Prostate gland (tissue), 2 donors: ENCODE measurements at regions of chr1 and their contacts with region 1.

Region 1: GRCh38 chr1:87131809-87132283 is 196.8 kb upstream of the LMO4 start:
- DNase-seq: peak; percentile 48
- H3K4me3 ChIP-seq: peak overlapping the region; percentile 22 to 33
- H3K27ac ChIP-seq: peak overlapping the region in 1 of 2 donors; percentile 39
- H3K4me1 ChIP-seq: no peaks in the 10 kb centered on the region
- H3K27me3 ChIP-seq: no peaks in the 10 kb centered on the region
- CTCF ChIP-seq: peak; percentile 69 to 88 (median 75)
- POLR2A ChIP-seq: no peak

Region 2: GRCh38 chr1:87292684-87293493 is 161.0 kb after region 1 on chr1:
- intact Hi-C with region 1: loop called (anchors 10 kb)
- DNase-seq: peak; percentile 49
- H3K4me3 ChIP-seq: no peak overlapping the region
- H3K27ac ChIP-seq: no peak overlapping the region
- H3K4me1 ChIP-seq: no peaks in the 10 kb centered on the region
- H3K27me3 ChIP-seq: no peaks in the 10 kb centered on the region
- CTCF ChIP-seq: peak; percentile 50 to 83 (median 71)
- POLR2A ChIP-seq: no peak

Region 3: GRCh38 chr1:88061492-88062177 is 929.8 kb after region 1 on chr1:
- intact Hi-C with region 1: loop called (anchors 10 kb)
- DNase-seq: peak; percentile 36
- H3K4me3 ChIP-seq: no peak overlapping the region
- H3K27ac ChIP-seq: no peak overlapping the region
- H3K4me1 ChIP-seq: no peaks in the 10 kb centered on the region
- H3K27me3 ChIP-seq: no peaks in the 10 kb centered on the region
- CTCF ChIP-seq: peak in 3 of 4 experiments; percentile 45 to 70 (median 62)
- POLR2A ChIP-seq: no peak

Region 4: DNA sequence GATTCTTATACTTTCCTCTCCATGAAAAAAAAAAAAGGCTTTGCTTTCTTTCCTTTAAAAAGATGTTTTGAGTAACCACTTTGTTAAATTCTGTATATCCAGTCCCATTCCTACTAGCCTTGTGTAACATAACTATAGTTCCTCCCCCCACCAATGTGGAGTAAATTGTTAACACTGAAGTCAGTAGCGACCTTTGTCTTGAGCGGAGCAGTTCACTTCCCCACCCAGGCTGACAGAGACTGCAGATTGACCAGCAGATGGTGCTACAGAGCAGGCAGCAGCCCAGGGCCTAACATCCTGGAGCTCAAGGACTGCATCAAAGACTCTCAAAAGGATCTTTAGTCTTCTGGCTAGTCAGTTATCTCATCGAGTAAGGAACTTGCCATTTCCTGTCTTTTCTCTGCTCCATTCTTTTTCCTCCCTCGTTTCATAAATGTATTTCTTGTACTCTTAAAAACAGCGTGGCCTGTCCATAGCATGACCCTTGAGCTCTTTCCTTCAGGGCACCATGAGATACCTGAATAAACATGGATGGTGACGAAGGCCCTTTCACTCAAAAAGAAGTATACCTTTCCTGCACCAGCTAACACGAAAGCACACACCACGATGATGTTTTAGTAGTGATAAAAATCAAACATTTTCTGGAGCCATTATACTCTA is 1048.7 kb after region 1 on chr1:
- intact Hi-C with region 1: loop called (anchors 10 kb)
- DNase-seq: peak; percentile 38
- H3K4me3 ChIP-seq: no peak overlapping the region
- H3K27ac ChIP-seq: no peak overlapping the region
- H3K4me1 ChIP-seq: no peaks in the 10 kb centered on the region
- H3K27me3 ChIP-seq: no peaks in the 10 kb centered on the region
- CTCF ChIP-seq: peak; percentile 70 to 78 (median 73)
- POLR2A ChIP-seq: no peak

Region 5: DNA sequence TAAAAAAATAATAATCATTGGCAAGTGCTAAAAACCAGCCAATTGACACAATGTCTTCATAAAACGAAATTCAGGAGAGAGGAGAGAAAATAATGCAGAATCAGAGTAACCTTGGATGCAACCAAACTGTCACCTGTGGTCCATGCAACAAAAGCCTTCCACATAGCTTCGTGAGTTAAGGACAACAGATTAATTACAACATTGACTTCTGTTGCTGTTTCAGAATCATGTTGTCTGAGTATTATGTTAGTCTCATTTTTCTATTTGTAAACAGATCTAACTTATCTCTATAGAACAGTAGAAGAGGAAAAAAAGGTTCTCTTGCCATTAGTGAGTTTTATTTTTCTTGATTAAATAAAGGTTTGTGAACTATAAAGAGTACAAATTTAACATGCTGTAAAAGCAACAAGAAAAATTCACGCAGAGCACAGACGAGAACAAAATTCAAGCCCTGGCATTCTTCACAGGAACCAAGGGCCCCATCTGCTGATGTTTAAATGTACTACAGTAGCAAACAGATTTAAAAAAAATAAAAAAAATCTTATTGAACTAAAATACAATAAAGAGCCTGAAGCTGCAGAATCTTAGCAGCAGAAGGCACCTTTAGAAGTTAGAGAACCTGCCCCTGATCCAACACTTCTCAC is 1171.1 kb after region 1 on chr1:
- intact Hi-C with region 1: loop called (anchors 5 kb)
- DNase-seq: peak; percentile 8
- H3K4me3 ChIP-seq: no peak overlapping the region
- H3K27ac ChIP-seq: no peak overlapping the region
- H3K4me1 ChIP-seq: no peaks in the 10 kb centered on the region
- H3K27me3 ChIP-seq: no peaks in the 10 kb centered on the region
- CTCF ChIP-seq: peak in 3 of 4 experiments; percentile 39 to 66 (median 55)
- POLR2A ChIP-seq: no peak